ENCODE measurements at regions of chr14 and their contacts with region 1.

Region 1: DNA sequence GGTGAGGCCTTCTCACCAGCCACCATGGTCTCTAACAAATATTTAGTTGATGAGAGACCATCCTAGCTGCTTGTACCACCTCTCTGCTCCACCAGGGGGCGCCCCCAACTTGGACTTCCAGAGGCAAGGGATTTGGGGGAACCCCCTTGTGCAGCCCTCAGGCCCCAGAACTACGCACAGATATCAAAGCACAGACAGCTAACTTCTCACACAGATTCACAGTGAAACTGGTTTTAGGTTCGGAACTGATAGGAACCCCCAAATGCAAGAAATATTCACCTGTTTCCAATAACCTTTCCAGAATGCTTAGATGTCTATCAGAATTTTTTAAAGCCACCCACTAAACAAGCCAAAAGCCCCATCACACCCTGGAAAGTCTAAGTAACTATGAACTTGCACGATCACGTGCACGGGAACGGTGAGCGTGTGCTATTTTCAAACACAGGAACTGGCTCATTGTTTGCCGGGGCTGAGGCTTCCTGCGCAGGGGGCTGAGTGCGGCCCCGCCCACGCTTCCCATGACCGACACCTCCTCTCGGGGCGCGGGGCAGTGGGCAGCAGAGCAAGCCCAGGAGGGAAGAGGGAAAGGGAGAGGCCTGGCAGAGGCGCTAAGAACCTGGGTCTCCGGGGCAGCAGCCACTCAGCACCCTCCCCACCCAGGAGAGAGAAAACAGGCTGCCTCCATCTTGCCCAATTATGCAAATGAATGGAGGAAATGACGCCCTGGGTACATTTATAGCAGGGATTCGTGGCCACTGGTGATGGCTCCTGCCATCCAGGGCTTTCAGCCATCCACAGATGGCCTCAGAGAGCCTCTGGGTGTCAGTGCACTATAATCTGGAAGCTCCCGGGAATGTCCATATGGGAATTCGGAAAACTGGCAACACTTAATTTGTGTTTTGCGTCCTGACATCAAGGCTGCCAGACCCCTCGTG is 79.4 kb upstream of the GPR68 start:
- DNase-seq: peak; percentile 99
- ATAC-seq: peak; percentile 80
- H3K4me3 Mint-ChIP-seq: peak overlapping the region; percentile 79
- H3K27ac Mint-ChIP-seq: peak overlapping the region; percentile 100
- H3K4me1 Mint-ChIP-seq: peaks cover 86% of the 10 kb centered on the region
- H3K27me3 Mint-ChIP-seq: no peaks in the 10 kb centered on the region
- CTCF ChIP-seq: peak; percentile 95

Region 2: GRCh38 chr14:91341751-91342154 is 17.8 kb after region 1 on chr14:
- CTCF ChIA-PET with region 1: interaction called, 27 read pairs
- POLR2A ChIA-PET with region 1: interaction called, 9 read pairs
- intact Hi-C with region 1: no loop called
- DNase-seq: no peak
- ATAC-seq: no peak
- H3K4me3 Mint-ChIP-seq: no peak overlapping the region
- H3K27ac Mint-ChIP-seq: no peak overlapping the region
- H3K4me1 Mint-ChIP-seq: peaks cover 18% of the 10 kb centered on the region
- H3K27me3 Mint-ChIP-seq: no peaks in the 10 kb centered on the region
- CTCF ChIP-seq: no peak

Region 3: GRCh38 chr14:91367173-91368171 is 43.5 kb after region 1 on chr14:
- CTCF ChIA-PET with region 1: interaction called, 183 read pairs
- POLR2A ChIA-PET with region 1: interaction called, 22 read pairs
- intact Hi-C with region 1: loop called (anchors 5 kb)
- DNase-seq: peak; percentile 82
- ATAC-seq: peak; percentile 51
- H3K4me3 Mint-ChIP-seq: peak overlapping the region; percentile 66
- H3K27ac Mint-ChIP-seq: peak overlapping the region; percentile 83
- H3K4me1 Mint-ChIP-seq: peaks cover 94% of the 10 kb centered on the region
- H3K27me3 Mint-ChIP-seq: no peaks in the 10 kb centered on the region
- CTCF ChIP-seq: no peak

Region 4: GRCh38 chr14:91388551-91388975 is 64.6 kb after region 1 on chr14:
- CTCF ChIA-PET with region 1: interaction called, 11 read pairs
- POLR2A ChIA-PET with region 1: interaction called, 4 read pairs
- intact Hi-C with region 1: no loop called
- DNase-seq: peak; percentile 75
- ATAC-seq: peak; percentile 73
- H3K4me3 Mint-ChIP-seq: peak overlapping the region; percentile 42
- H3K27ac Mint-ChIP-seq: peak overlapping the region; percentile 87
- H3K4me1 Mint-ChIP-seq: peaks cover 88% of the 10 kb centered on the region
- H3K27me3 Mint-ChIP-seq: no peaks in the 10 kb centered on the region
- CTCF ChIP-seq: no peak

Region 5: DNA sequence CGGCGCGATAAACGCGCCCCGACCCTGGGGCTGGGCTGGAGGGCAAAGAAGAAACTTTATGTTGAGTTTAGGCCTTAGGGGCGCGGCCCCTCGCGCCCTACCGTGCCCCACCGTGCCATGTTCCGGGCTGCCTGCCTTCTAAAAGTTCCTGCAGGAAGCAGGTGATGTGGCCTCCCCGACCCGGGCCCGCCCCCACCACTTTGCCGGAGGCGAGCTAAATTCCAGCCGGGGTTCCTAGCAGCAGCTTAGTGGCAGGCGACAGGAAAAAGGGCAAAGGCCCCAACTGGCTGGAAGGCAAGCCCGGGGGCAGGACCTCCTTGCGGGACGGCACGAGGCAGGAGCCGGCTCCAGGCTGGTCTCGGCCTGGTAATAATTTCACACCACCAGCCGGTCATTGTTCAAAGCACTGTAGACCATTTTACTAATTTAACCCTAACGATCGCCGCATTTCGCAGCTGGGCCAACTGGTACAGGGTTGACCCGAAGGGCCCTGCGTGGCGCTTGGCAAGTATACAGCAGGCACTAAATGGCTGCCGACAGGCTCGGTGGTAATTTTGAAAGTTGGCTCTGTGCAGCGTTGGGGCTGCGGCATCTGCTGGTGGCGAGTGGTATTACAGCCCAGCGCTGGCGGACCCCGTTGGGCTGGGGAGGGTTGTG is 94.6 kb after region 1 on chr14:
- CTCF ChIA-PET with region 1: interaction called, 155 read pairs
- POLR2A ChIA-PET with region 1: interaction called, 137 read pairs
- intact Hi-C with region 1: loop called (anchors 1 kb)
- DNase-seq: peak; percentile 89
- ATAC-seq: peak; percentile 54
- H3K4me3 Mint-ChIP-seq: peak overlapping the region; percentile 72
- H3K27ac Mint-ChIP-seq: peak overlapping the region; percentile 90
- H3K4me1 Mint-ChIP-seq: peaks cover 29% of the 10 kb centered on the region
- H3K27me3 Mint-ChIP-seq: no peaks in the 10 kb centered on the region
- CTCF ChIP-seq: peak; percentile 99